ENCODE measurements at regions of chr2 and their contacts with region 1.

Region 1: DNA sequence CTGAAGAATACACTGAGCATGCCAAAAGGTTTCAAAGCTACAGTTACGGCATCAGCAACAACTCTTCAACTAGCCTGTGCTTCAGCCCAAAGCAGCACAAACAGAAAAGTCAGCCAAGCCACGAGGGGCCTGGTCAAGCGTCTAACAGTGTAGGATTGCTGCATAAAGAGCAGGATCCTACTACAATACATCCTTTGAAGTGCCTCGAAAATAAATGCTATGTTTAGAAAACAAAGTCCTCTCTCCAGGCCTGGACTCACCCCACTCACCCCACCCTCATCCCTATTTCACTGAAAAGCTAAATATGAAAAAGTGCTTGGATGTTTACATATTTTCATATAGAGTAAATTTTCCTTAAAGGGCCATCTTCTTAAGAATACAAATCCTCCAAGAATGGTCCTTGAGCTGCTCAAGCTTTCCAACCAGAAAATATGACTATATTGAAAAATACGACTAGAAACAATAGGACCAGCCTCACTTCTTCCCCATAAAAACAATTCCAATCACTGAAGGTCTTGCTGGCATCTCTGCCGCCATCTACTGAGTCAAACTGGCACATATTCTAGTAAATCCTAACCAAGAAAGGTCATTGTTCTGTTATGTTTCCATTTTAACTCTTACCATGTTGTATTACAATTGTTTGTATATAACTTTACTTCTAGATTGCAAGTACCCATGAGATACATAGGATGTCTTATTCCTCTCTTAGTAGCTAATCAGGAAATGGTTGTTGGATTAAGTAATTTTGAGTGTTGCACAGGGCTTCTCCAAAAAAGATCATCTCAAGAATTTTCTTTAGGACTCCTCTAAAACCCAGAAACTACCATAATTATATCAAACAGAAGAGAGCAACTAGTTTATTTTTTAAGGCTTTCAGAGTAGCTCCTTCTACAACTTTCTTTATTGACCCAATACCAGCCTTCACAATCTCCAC is 63.6 kb downstream of the CLHC1 start:
- DNase-seq: peak; percentile 64 to 82 (median 78)
- H3K4me3 ChIP-seq: no peak overlapping the region
- H3K27ac ChIP-seq: no peak overlapping the region
- H3K4me1 ChIP-seq: peaks cover 0 to 2% (median under 1%) of the 10 kb centered on the region in 4 experiments
- H3K27me3 ChIP-seq: no peaks in the 10 kb centered on the region

Region 2: DNA sequence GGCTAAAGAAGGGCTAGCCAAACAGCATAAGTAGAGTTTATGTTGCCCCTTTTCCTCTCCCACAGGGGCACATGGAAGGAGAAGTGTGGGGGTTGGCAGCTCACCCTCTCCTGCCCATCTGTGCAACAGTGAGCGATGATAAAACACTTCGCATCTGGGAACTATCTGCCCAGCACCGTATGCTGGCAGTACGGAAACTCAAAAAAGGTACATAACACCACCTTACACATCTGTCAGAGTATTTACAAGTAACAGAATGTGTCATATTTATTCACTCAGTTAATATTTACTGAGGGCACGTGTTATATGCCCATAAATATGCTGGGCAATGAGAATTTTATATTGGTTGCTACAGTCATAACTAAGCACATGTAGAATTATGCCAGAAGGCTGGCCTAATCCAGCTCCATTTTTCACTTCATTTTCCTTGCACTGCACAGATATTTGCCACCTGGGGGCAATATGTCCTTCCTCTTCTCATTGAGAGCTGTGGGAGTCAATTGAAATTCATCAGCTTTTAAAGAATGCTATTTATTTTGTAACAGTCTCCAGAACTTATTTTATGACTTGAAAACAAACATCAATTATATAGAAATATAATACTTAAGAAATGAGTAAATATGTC is 268.8 kb before region 1 on chr2:
- CTCF ChIA-PET with region 1: interaction called, 83 read pairs
- POLR2A ChIA-PET with region 1: no interaction called
- DNase-seq: peak; percentile 46 to 72 (median 69)
- H3K4me3 ChIP-seq: no peak overlapping the region
- H3K27ac ChIP-seq: no peak overlapping the region
- H3K4me1 ChIP-seq: peaks cover 0 to 7% (median 0%) of the 10 kb centered on the region in 4 experiments
- H3K27me3 ChIP-seq: no peaks in the 10 kb centered on the region

Region 3: GRCh38 chr2:55014962-55015939 is 153.2 kb before region 1 on chr2:
- CTCF ChIA-PET with region 1: interaction called, 137 read pairs
- POLR2A ChIA-PET with region 1: no interaction called
- DNase-seq: peak; percentile 63 to 71 (median 68)
- H3K4me3 ChIP-seq: no peak overlapping the region
- H3K27ac ChIP-seq: no peak overlapping the region
- H3K4me1 ChIP-seq: peaks cover 28 to 67% (median 45%) of the 10 kb centered on the region in 4 experiments
- H3K27me3 ChIP-seq: no peaks in the 10 kb centered on the region

Region 4: DNA sequence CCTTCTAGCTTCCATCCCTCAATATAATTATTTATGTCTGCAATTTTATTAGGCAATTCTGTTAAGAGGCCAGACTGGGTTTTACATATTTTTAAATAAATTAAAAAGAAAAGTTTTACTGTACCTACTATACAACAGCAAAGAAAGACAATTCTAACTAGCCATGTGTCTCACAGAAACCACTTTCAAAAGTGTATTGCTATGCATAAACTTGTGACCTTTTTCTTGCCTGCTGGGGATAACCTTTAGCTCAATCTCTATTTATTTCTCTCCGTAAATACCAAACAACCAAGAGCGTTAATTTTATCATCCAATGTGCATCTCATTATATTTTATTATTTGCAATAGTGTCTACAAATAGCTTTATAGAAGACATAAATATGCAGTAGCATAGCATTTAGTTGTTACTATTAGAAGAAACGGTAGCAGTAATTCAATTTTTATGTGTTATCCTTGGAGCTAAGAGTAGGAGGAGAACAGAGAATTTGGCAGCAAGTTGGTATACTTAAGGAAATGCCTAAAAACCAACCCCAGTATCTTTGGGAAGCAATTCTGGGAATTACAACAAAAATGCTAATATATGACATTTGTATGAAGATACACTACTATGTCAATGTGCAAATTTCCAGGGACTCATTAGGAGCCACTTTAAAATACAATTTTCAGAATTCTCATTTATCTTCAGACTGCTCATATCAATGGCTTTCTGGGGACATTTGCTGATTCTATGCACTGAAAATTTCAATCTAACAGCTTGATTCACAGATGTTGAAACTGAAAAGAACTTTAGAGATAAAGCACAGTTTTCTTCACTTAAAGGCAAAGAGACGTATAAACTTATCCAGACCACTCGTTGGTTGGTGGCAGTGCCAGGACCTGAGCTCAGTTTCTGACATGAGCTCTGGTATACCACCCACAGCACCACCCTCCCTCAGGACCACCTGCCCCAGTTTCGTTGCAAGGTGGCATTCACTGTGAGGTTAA is 95.2 kb before region 1 on chr2:
- CTCF ChIA-PET with region 1: interaction called, 15 read pairs
- POLR2A ChIA-PET with region 1: no interaction called
- DNase-seq: no peak
- H3K4me3 ChIP-seq: no peak overlapping the region
- H3K27ac ChIP-seq: no peak overlapping the region
- H3K4me1 ChIP-seq: peaks cover 0 to 5% (median 0%) of the 10 kb centered on the region in 4 experiments
- H3K27me3 ChIP-seq: no peaks in the 10 kb centered on the region

Region 5: DNA sequence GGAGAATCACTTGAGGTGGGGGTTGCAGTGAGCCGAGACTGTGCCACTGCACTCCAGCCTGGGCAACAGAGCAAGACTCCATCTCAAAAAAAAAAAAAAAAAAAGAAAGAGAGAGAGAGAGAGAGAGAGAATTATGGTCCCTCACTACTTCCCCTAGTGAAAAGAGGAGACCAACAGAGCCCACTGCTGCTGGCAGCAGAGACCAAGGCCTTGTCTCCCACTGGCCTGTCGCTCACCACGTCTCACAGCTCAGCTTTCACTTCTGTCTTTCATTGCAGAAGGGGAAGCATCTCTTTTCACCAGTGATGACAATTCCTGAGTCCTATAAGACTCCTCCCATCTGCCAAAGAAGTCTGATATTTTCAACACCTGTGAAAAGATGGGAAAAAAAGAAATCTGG is 17.7 kb before region 1 on chr2:
- CTCF ChIA-PET with region 1: interaction called, 14 read pairs
- POLR2A ChIA-PET with region 1: no interaction called
- DNase-seq: peak in 2 of 3 donors; percentile 48 to 62
- H3K4me3 ChIP-seq: no peak overlapping the region
- H3K27ac ChIP-seq: no peak overlapping the region
- H3K4me1 ChIP-seq: peaks cover 0 to 5% (median 0%) of the 10 kb centered on the region in 4 experiments
- H3K27me3 ChIP-seq: no peaks in the 10 kb centered on the region

Measured in common myeloid progenitor, CD34-positive (primary cell).